Activated B cell treated with CpG ODN at 0.5 μM for 24 hours (primary cell): ENCODE measurements at regions of chr15 and their contacts with region 1.

Region 1: DNA sequence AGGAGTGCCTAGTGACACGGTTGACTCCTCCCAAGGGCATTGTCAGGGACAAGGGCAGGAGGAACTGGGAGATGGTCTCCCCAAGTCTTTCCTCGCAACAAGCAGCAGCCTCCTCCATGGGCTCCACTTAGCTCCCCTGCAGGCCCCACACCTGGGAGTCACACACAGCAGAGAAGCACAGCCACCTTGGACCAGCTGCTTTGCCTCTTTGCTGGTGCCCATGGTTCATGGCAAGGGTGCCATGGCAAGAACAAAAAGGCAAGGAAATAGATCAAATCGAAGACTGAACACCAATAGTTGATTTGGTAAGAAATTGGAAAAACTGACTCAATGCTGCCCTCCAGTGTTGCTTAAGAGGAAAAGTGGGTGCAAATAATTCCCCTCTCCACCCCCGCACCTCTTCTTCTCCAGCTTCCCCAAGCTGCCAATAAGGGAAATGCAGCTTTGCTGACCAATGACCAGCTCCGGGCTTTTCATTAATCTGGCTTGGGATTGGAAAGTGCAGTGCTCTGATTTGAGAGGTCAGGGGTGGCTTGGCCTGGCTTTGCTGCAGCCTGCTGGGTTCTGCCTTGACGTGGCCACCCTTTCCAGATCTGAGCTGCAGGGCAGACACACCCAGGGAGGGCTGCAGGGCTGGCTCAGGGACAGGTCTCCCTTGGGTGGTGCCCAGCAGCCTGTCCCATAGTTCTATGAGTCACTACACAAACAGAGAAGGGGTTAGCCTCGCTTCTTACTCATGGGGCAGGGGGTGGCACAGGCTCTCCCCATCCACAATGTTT is 162.0 kb downstream of the KLF13 start:
- DNase-seq: no peak
- ATAC-seq: peak; percentile 69
- H3K4me3 Mint-ChIP-seq: no peak overlapping the region
- H3K27ac Mint-ChIP-seq: no peak overlapping the region
- H3K4me1 Mint-ChIP-seq: peaks cover 22% of the 10 kb centered on the region
- H3K27me3 Mint-ChIP-seq: peaks cover 8% of the 10 kb centered on the region
- CTCF ChIP-seq: peak; percentile 24

Region 2: GRCh38 chr15:30903497-30904201 is 585.0 kb before region 1 on chr15 and contains the start of gene FAN1:
- CTCF ChIA-PET with region 1: no interaction called
- POLR2A ChIA-PET with region 1: no interaction called
- intact Hi-C with region 1: loop called (anchors 10 kb)
- DNase-seq: peak; percentile 69
- ATAC-seq: peak; percentile 86
- H3K4me3 Mint-ChIP-seq: peak within 1 kb of the TSS; percentile 98
- H3K27ac Mint-ChIP-seq: peak within 1 kb of the TSS; percentile 82
- H3K4me1 Mint-ChIP-seq: peaks cover 31% of the 10 kb centered on the region
- H3K27me3 Mint-ChIP-seq: no peaks in the 10 kb centered on the region
- CTCF ChIP-seq: no peak
- total RNA-seq, gene FAN1: 16.2 and 20.8 TPM in 2 replicates

Region 3: GRCh38 chr15:31200735-31201151 is 287.9 kb before region 1 on chr15:
- CTCF ChIA-PET with region 1: interaction called, 54 read pairs
- POLR2A ChIA-PET with region 1: interaction called, 3 read pairs
- intact Hi-C with region 1: loop called (anchors 1 kb)
- DNase-seq: peak; percentile 42
- ATAC-seq: peak; percentile 45
- H3K4me3 Mint-ChIP-seq: no peak overlapping the region
- H3K27ac Mint-ChIP-seq: no peak overlapping the region
- H3K4me1 Mint-ChIP-seq: peaks cover 29% of the 10 kb centered on the region
- H3K27me3 Mint-ChIP-seq: no peaks in the 10 kb centered on the region
- CTCF ChIP-seq: no peak

Region 4: DNA sequence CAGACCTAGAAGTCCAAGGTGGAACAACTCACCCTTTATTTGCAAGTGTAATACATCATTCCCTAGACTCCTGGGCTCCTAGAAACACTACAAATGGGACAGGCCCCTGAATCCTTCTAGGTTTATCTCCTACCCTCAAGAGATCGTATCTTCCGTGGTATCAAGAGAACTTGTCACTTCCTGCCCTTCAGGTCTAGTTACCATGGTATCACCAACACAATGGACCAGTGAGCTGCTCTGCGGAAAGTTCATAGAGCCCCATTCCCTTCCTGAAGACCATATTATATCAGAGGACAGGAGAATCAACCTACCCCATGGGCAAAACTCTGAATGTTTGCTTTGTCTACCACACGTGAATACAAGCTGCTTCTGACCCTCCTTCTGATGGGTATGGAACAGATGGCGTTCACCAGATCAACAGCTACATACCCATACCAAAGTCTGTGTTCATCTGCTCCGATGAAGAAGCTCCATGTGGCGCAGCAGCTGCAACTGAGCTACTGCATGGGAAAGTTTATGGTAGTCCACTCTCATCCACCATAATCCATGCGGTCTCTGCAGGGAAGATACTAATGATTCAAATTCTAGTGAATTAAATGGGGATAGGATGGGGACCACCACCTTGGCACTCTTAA is 246.6 kb before region 1 on chr15:
- CTCF ChIA-PET with region 1: no interaction called
- POLR2A ChIA-PET with region 1: no interaction called
- intact Hi-C with region 1: no loop called
- DNase-seq: no peak
- ATAC-seq: no peak
- H3K4me3 Mint-ChIP-seq: no peak overlapping the region
- H3K27ac Mint-ChIP-seq: no peak overlapping the region
- H3K4me1 Mint-ChIP-seq: peaks cover 18% of the 10 kb centered on the region
- H3K27me3 Mint-ChIP-seq: no peaks in the 10 kb centered on the region
- CTCF ChIP-seq: no peak

Region 5: GRCh38 chr15:31344823-31345605 is 143.6 kb before region 1 on chr15:
- CTCF ChIA-PET with region 1: interaction called, 8 read pairs
- POLR2A ChIA-PET with region 1: interaction called, 4 read pairs
- intact Hi-C with region 1: loop called (anchors 1 kb)
- DNase-seq: peak; percentile 41
- ATAC-seq: peak; percentile 67
- H3K4me3 Mint-ChIP-seq: peak overlapping the region; percentile 88
- H3K27ac Mint-ChIP-seq: peak overlapping the region; percentile 91
- H3K4me1 Mint-ChIP-seq: peaks cover 100% of the 10 kb centered on the region
- H3K27me3 Mint-ChIP-seq: no peaks in the 10 kb centered on the region
- CTCF ChIP-seq: no peak

Region 6: DNA sequence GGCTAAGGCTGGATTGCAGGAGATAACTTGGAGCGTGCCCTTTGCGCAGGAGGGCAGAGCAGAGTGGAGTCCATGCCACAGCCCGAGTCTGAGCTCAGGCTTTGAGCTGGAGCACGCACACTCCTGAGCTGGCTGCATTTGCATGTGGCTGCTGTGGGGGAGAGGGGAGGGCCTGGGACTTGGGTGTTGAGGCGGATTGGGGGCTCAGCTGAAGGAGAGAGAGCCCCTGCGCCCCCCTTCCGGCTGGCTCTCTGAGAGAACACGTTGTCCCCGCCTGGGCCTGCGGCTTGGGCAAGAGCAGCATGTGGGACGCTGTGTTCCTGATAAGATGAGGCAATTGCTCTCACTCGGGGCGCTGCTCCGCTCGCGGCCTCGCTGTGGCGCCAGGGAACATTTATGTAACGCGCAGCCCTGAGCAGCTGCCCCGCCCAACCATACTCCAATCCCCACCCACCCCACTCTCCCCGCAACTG is 122.9 kb before region 1 on chr15:
- CTCF ChIA-PET with region 1: interaction called, 27 read pairs
- POLR2A ChIA-PET with region 1: interaction called, 6 read pairs
- intact Hi-C with region 1: loop called (anchors 1 kb)
- DNase-seq: peak; percentile 48
- ATAC-seq: peak; percentile 48
- H3K4me3 Mint-ChIP-seq: peak overlapping the region; percentile 67
- H3K27ac Mint-ChIP-seq: peak overlapping the region; percentile 66
- H3K4me1 Mint-ChIP-seq: peaks cover 99% of the 10 kb centered on the region
- H3K27me3 Mint-ChIP-seq: no peaks in the 10 kb centered on the region
- CTCF ChIP-seq: no peak

Region 7: GRCh38 chr15:31435261-31435911 is 53.2 kb before region 1 on chr15:
- CTCF ChIA-PET with region 1: interaction called, 226 read pairs
- POLR2A ChIA-PET with region 1: interaction called, 46 read pairs
- intact Hi-C with region 1: loop called (anchors 1 kb)
- DNase-seq: no peak
- ATAC-seq: peak; percentile 66
- H3K4me3 Mint-ChIP-seq: peak overlapping the region; percentile 80
- H3K27ac Mint-ChIP-seq: peak overlapping the region; percentile 91
- H3K4me1 Mint-ChIP-seq: peaks cover 64% of the 10 kb centered on the region
- H3K27me3 Mint-ChIP-seq: no peaks in the 10 kb centered on the region
- CTCF ChIP-seq: no peak

Region 8: GRCh38 chr15:31458591-31459399 is 29.8 kb before region 1 on chr15:
- CTCF ChIA-PET with region 1: interaction called, 19 read pairs
- POLR2A ChIA-PET with region 1: no interaction called
- intact Hi-C with region 1: no loop called
- DNase-seq: no peak
- ATAC-seq: peak; percentile 98
- H3K4me3 Mint-ChIP-seq: peak overlapping the region; percentile 64
- H3K27ac Mint-ChIP-seq: peak overlapping the region; percentile 56
- H3K4me1 Mint-ChIP-seq: peaks cover 47% of the 10 kb centered on the region
- H3K27me3 Mint-ChIP-seq: no peaks in the 10 kb centered on the region
- CTCF ChIP-seq: no peak